Right ventricle myocardium inferior (tissue), 1 donor: ENCODE measurements at regions of chr12 and their contacts with region 1.

Region 1: GRCh38 chr12:28190321-28191050 is at the start of gene CCDC91:
- DNase-seq: peak; percentile 92
- ATAC-seq: peak; percentile 92
- total RNA-seq, gene CCDC91: 47.0 TPM

Region 2: GRCh38 chr12:27710592-27711316 is 479.7 kb before region 1 on chr12 and contains the start of gene MRPS35:
- intact Hi-C with region 1: loop called (anchors 10 kb)
- DNase-seq: peak; percentile 95
- ATAC-seq: peak; percentile 98
- total RNA-seq, gene MRPS35: 56.7 TPM

Region 3: GRCh38 chr12:27733052-27733656 is 457.3 kb before region 1 on chr12:
- intact Hi-C with region 1: no loop called
- DNase-seq: no peak
- ATAC-seq: no peak

Region 4: GRCh38 chr12:28258998-28259397 is 68.5 kb after region 1 on chr12:
- intact Hi-C with region 1: no loop called
- DNase-seq: no peak
- ATAC-seq: no peak

Region 5: GRCh38 chr12:28269851-28270250 is 79.4 kb after region 1 on chr12:
- intact Hi-C with region 1: no loop called
- DNase-seq: no peak
- ATAC-seq: no peak